Left ventricle myocardium inferior (tissue), 1 donor: ENCODE measurements at regions of chr1 and their contacts with region 1.

Region 1: GRCh38 chr1:180837020-180837419 is 75.7 kb upstream of the KIAA1614 start:
- DNase-seq: no peak
- H3K4me3 ChIP-seq: no peak overlapping the region
- H3K27ac ChIP-seq: no peak overlapping the region
- H3K4me1 ChIP-seq: peaks cover 2% of the 10 kb centered on the region
- H3K27me3 ChIP-seq: no peaks in the 10 kb centered on the region
- CTCF ChIP-seq: no peak

Region 2: DNA sequence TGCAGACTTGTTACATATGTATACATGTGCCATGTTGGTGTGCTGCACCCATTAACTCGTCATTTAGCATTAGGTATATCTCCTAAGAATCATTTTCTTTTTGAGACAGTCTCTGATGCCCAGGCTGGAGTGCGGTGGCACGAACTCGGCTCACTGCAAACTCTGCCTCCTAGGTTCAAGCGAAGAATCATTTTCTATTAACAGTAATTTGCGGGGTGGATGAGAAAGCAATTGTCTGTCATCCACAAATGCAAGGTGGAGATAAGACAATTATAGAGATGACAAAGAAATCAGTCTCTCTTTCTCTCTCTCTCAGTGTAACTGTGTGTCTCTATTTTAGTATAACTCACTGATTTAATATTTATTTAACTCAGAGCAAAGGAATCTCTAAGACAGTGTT is 55.3 kb before region 1 on chr1:
- intact Hi-C with region 1: loop called (anchors 2 kb)
- DNase-seq: no peak
- H3K4me3 ChIP-seq: no peak overlapping the region
- H3K27ac ChIP-seq: no peak overlapping the region
- H3K4me1 ChIP-seq: peaks cover 24% of the 10 kb centered on the region
- H3K27me3 ChIP-seq: no peaks in the 10 kb centered on the region
- CTCF ChIP-seq: no peak

Region 3: GRCh38 chr1:180881806-180882509 is 44.9 kb after region 1 on chr1:
- intact Hi-C with region 1: no loop called
- DNase-seq: no peak
- H3K4me3 ChIP-seq: no peak overlapping the region
- H3K27ac ChIP-seq: peak overlapping the region; percentile 24
- H3K4me1 ChIP-seq: no peaks in the 10 kb centered on the region
- H3K27me3 ChIP-seq: no peaks in the 10 kb centered on the region
- CTCF ChIP-seq: peak; percentile 60

Region 4: DNA sequence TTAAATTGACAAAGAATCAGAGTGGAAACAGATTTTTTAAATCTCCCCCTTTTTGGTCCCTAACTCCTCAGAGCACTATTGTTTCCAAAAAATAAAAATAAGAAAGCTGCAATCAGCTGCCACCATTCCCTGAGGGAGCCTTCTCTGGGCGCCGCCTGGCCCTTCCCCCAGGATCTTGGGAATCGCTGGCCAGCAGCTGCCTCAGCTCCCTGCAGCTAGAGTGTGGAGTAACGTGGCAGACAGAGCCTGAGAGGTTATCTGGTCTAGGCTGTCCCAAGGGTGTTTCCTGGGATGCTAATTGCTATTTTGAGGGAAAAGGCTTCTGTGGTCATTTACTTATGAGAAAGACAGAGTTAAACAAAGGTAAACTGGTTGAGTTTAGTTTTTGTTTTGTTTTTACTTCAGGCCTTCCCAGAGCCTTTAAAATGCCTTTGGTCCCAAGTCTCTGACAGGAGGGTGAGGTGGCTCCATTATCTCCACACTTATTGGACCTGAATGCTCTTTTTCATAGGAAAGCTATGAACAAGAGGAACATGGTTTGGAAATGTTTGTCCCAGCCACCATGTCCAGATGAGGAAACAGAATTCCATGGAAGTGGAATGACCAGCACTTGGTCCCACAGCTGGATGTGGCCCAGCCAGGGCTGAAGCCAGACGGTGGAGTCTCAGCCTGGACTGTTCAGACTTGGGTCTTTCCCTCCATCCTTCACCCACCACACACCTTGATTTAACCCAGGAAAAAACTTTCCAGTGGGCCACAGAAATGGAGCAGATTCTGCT is 61.6 kb after region 1 on chr1:
- intact Hi-C with region 1: no loop called
- DNase-seq: no peak
- H3K4me3 ChIP-seq: no peak overlapping the region
- H3K27ac ChIP-seq: peak overlapping the region; percentile 36
- H3K4me1 ChIP-seq: peaks cover 21% of the 10 kb centered on the region
- H3K27me3 ChIP-seq: no peaks in the 10 kb centered on the region
- CTCF ChIP-seq: no peak

Region 5: DNA sequence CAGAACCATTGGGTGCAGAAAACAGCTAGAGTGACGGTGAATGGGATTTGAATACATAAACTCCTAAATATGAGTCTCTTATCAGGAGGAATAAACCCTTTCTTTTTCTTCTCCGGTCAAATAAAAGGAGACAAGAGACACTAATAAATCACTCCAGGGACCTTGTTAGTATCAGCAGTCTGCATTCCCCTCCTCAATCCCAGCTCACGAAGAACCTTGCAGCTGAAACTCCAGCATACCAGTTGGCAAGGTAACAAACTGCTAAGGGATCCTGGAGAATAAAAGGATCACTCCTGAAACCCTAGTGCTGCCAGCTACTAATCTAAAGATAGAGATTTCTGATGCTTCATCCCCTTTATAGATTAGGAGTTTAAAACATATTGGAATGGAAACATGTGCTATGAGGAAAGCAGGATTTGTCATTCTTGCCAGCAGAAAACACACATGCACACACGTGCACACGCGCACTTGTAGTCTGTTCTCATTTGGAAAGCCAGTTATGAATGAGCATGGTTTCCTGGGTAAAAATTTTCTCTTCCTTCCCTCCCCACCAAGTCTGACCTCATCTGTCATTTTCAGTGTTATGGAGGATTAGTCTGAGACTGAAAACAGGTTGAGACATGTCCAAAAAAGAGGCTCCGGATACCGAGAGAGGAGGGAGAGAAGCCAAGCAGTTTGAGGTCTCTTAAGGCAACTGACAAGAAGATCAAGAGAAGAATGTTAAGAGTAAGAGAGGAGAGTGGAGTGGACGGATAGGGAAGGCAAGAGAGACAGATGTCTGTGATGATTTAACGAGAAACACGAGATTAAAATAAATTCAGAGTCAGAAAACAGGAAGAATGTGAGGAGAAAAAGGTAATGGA is 262.4 kb after region 1 on chr1:
- intact Hi-C with region 1: no loop called
- DNase-seq: no peak
- H3K4me3 ChIP-seq: no peak overlapping the region
- H3K27ac ChIP-seq: peak overlapping the region; percentile 41
- H3K4me1 ChIP-seq: peaks cover 88% of the 10 kb centered on the region
- H3K27me3 ChIP-seq: no peaks in the 10 kb centered on the region
- CTCF ChIP-seq: no peak